Activated CD8-positive, alpha-beta memory T cell treated with anti-CD3 and anti-CD28 coated beads, Interleukin-2, amount 10 ng/mL, durations not matched to agents 7 days and 5 days (primary cell): ENCODE measurements at regions of chr6 and their contacts with region 1.

Region 1: GRCh38 chr6:37051138-37052026 is 45.9 kb downstream of the FGD2 start:
- DNase-seq: peak; percentile 96
- ATAC-seq: peak; percentile 61
- H3K4me3 Mint-ChIP-seq: peak overlapping the region; percentile 83
- H3K27ac Mint-ChIP-seq: peak overlapping the region; percentile 96
- H3K4me1 Mint-ChIP-seq: peaks cover 74% of the 10 kb centered on the region
- H3K27me3 Mint-ChIP-seq: no peaks in the 10 kb centered on the region

Region 2: GRCh38 chr6:36820700-36821580 is 230.4 kb before region 1 on chr6:
- CTCF ChIA-PET with region 1: no interaction called
- DNase-seq: no peak
- ATAC-seq: no peak
- H3K4me3 Mint-ChIP-seq: no peak overlapping the region
- H3K27ac Mint-ChIP-seq: no peak overlapping the region
- H3K4me1 Mint-ChIP-seq: peaks cover 14% of the 10 kb centered on the region
- H3K27me3 Mint-ChIP-seq: no peaks in the 10 kb centered on the region

Region 3: GRCh38 chr6:36962874-36963273 is 88.5 kb before region 1 on chr6:
- CTCF ChIA-PET with region 1: no interaction called
- DNase-seq: peak; percentile 87
- ATAC-seq: peak; percentile 66
- H3K4me3 Mint-ChIP-seq: no peak overlapping the region
- H3K27ac Mint-ChIP-seq: peak overlapping the region; percentile 58
- H3K4me1 Mint-ChIP-seq: peaks cover 47% of the 10 kb centered on the region
- H3K27me3 Mint-ChIP-seq: no peaks in the 10 kb centered on the region

Region 4: GRCh38 chr6:37039958-37040357 is 11.4 kb before region 1 on chr6:
- CTCF ChIA-PET with region 1: interaction called, 610 read pairs
- DNase-seq: no peak
- ATAC-seq: peak; percentile 50
- H3K4me3 Mint-ChIP-seq: no peak overlapping the region
- H3K27ac Mint-ChIP-seq: peak overlapping the region; percentile 82
- H3K4me1 Mint-ChIP-seq: peaks cover 60% of the 10 kb centered on the region
- H3K27me3 Mint-ChIP-seq: no peaks in the 10 kb centered on the region

Region 5: GRCh38 chr6:37102279-37103168 is 51.1 kb after region 1 on chr6:
- CTCF ChIA-PET with region 1: interaction called, 21 read pairs
- DNase-seq: peak; percentile 83
- ATAC-seq: peak; percentile 89
- H3K4me3 Mint-ChIP-seq: peak overlapping the region; percentile 65
- H3K27ac Mint-ChIP-seq: peak overlapping the region; percentile 75
- H3K4me1 Mint-ChIP-seq: peaks cover 50% of the 10 kb centered on the region
- H3K27me3 Mint-ChIP-seq: no peaks in the 10 kb centered on the region

Region 6: DNA sequence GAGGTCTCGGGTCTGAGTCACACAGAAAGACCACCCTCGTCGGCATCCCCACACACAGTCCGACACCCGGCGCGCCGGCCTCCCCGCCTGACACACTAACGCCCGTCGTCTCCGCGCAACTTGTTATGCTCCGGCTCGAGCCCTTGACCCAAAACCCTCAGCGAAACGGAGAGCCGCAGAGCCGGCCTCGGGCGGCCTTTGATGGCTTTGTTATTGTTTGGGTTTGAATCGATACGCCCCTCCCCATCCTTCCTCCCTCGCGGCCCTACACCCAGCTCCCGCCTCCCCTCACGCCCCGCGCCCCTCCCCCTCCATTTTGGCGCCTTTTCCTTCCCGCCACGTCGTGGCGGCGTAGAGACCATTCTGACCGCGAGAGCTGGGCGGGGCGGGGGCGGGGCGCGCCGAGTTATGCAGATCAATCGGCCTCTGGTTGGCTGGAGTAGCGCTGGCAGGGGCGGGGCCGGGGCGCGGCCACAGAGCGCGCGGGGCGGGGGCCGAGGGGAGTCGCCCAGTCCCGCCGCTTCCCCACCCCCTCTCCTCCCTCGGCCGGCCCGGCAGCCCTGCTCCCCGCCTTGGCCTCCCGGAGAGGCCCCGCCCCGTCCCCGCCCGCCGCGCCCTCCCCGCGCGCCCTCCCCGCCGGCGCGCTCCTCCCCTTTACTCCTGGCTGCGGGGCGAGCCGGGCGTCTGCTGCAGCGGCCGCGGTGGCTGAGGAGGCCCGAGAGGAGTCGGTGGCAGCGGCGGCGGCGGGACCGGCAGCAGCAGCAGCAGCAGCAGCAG is 118.3 kb after region 1 on chr6 and contains the start of gene PIM1:
- CTCF ChIA-PET with region 1: interaction called, 315 read pairs
- DNase-seq: peak; percentile 100
- ATAC-seq: peak; percentile 85
- H3K4me3 Mint-ChIP-seq: peak within 1 kb of the TSS; percentile 93
- H3K27ac Mint-ChIP-seq: peak within 1 kb of the TSS; percentile 96
- H3K4me1 Mint-ChIP-seq: peaks cover 30% of the 10 kb centered on the region
- H3K27me3 Mint-ChIP-seq: no peaks in the 10 kb centered on the region
- total RNA-seq, gene PIM1: 361 to 464 TPM

Region 7: GRCh38 chr6:37182736-37183590 is 131.6 kb after region 1 on chr6:
- CTCF ChIA-PET with region 1: interaction called, 24 read pairs
- DNase-seq: peak; percentile 91
- ATAC-seq: peak; percentile 95
- H3K4me3 Mint-ChIP-seq: peak overlapping the region; percentile 50
- H3K27ac Mint-ChIP-seq: peak overlapping the region; percentile 98
- H3K4me1 Mint-ChIP-seq: peaks cover 73% of the 10 kb centered on the region
- H3K27me3 Mint-ChIP-seq: no peaks in the 10 kb centered on the region

Region 8: GRCh38 chr6:37190159-37190535 is 138.8 kb after region 1 on chr6:
- CTCF ChIA-PET with region 1: interaction called, 14 read pairs
- DNase-seq: no peak
- ATAC-seq: peak; percentile 31
- H3K4me3 Mint-ChIP-seq: no peak overlapping the region
- H3K27ac Mint-ChIP-seq: peak overlapping the region; percentile 81
- H3K4me1 Mint-ChIP-seq: peaks cover 73% of the 10 kb centered on the region
- H3K27me3 Mint-ChIP-seq: no peaks in the 10 kb centered on the region

Region 9: DNA sequence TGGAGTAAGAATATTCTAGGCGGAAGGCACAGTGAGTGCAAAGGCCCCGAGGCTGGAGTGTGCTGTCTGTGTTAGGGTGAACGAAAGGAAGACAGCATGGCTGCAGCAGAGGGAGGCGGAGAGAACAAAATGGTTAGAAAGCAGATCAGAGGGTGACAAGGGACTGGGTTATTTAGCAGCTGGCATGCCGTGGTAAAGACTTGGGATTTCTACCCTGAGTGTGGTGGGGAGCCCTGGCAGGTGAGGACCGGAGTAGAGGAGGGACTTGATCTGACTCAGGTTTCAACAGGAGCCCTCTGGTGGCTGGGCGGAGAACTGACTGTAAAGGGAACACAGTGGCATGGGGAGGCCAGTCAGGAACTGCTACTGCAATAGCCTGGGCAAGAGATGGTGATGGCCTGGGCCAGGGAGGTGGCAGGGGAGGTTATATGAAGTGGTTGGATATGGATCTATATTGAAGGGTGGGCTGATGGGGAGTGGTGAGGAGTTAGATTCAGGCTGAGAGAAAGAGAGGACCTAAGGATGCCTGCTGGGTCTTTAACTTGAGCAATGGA is 156.6 kb after region 1 on chr6:
- CTCF ChIA-PET with region 1: interaction called, 191 read pairs
- DNase-seq: peak; percentile 97
- ATAC-seq: peak; percentile 85
- H3K4me3 Mint-ChIP-seq: peak overlapping the region; percentile 3
- H3K27ac Mint-ChIP-seq: peak overlapping the region; percentile 88
- H3K4me1 Mint-ChIP-seq: peaks cover 65% of the 10 kb centered on the region
- H3K27me3 Mint-ChIP-seq: no peaks in the 10 kb centered on the region